Mammary epithelial cell (primary cell): ENCODE measurements at regions of chr21 and their contacts with region 1.

Region 1: DNA sequence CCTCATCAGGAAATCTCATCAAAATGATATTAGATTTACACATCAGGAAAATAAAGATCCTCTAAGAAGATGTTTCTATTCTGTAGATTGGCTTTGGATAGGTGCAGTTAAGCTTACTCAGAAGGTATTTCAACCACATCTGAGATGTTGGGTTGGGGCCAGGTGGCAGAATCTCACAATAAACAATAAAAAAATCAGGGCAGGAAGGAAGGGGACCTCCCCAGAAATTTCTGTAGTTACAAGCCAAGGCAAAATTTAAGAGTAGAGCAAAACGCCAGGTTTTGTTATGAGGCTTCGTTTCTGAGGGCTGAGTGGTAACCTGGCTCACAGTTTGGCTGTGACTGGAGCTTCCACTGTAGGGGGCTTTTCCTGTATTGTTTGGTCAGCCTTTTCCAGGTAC is 84.8 kb downstream of the HUNK start:
- DNase-seq: no peak
- H3K4me3 ChIP-seq: no peak overlapping the region
- H3K27ac ChIP-seq: no peak overlapping the region
- H3K4me1 ChIP-seq: no peaks in the 10 kb centered on the region
- H3K27me3 ChIP-seq: no peaks in the 10 kb centered on the region
- CTCF ChIP-seq: no peak

Region 2: GRCh38 chr21:31911138-31911907 is 46.3 kb before region 1 on chr21:
- CTCF ChIA-PET with region 1: no interaction called
- dilution Hi-C with region 1: loop called (anchors 5 kb)
- in situ Hi-C with region 1: no loop called
- intact Hi-C with region 1: no loop called
- DNase-seq: peak; percentile 49
- H3K4me3 ChIP-seq: no peak overlapping the region
- H3K27ac ChIP-seq: no peak overlapping the region
- H3K4me1 ChIP-seq: no peaks in the 10 kb centered on the region
- H3K27me3 ChIP-seq: no peaks in the 10 kb centered on the region
- CTCF ChIP-seq: no peak

Region 3: DNA sequence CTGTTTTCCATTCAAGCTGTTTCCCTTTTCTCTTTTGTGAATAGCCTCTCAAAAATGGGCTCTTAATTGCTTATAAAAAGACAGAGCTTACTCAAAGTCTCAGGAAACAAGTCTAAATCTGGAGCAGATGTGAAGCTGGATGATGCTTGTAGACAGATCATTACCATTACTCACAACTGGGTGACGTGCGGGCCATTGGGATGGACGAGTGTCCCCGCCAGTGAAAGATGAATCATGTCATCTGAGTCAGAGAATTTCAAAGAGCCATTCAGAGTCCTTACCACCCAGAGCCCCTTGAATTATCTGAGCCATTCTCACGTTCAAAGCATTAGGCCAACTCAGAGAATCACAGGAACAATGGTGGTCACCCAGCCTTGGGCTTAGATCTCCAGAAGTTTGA is 49.8 kb after region 1 on chr21:
- CTCF ChIA-PET with region 1: no interaction called
- dilution Hi-C with region 1: loop called (anchors 5 kb)
- in situ Hi-C with region 1: no loop called
- intact Hi-C with region 1: no loop called
- DNase-seq: no peak
- H3K4me3 ChIP-seq: no peak overlapping the region
- H3K27ac ChIP-seq: no peak overlapping the region
- H3K4me1 ChIP-seq: no peaks in the 10 kb centered on the region
- H3K27me3 ChIP-seq: no peaks in the 10 kb centered on the region
- CTCF ChIP-seq: no peak